Endothelial cell of umbilical vein (primary cell): ENCODE measurements at regions of chr17 and their contacts with region 1.

Region 1: GRCh38 chr17:69246726-69247375 is 18.2 kb upstream of the ABCA10 start:
- DNase-seq: peak; percentile 69
- H3K4me3 ChIP-seq: no peak overlapping the region
- H3K27ac ChIP-seq: no peak overlapping the region
- H3K4me1 ChIP-seq: no peaks in the 10 kb centered on the region
- H3K27me3 ChIP-seq: no peaks in the 10 kb centered on the region
- CTCF ChIP-seq: peak in 1 of 2 donors; percentile 27
- POLR2A ChIP-seq: no peak

Region 2: DNA sequence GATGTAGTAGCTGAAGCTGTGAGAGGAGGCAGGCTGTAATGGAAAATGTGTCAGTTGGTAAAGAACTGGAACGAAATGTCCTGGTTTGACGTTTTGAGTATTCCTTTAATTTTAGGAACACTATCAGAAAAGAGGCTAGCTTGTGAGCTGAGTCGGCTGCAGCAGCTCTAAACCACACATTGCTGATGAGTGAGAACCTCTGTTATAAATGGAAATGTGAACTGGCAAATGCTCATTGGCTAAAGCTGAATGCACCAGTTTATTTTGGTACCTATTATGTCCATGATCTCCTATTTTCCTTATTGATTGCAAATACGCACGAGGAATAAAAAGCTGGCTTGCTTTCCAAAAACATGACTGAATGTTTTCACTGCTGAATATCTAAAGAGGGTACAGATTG is 778.5 kb before region 1 on chr17:
- CTCF ChIA-PET with region 1: interaction called, 5 read pairs
- POLR2A ChIA-PET with region 1: no interaction called
- dilution Hi-C with region 1: no loop called
- intact Hi-C with region 1: loop called (anchors 5 kb)
- DNase-seq: no peak
- H3K4me3 ChIP-seq: no peak overlapping the region
- H3K27ac ChIP-seq: no peak overlapping the region
- H3K4me1 ChIP-seq: no peaks in the 10 kb centered on the region
- H3K27me3 ChIP-seq: peaks cover 6 to 8% of the 10 kb centered on the region in 2 experiments
- CTCF ChIP-seq: no peak
- POLR2A ChIP-seq: no peak

Region 3: GRCh38 chr17:68533887-68534694 is 712.8 kb before region 1 on chr17:
- CTCF ChIA-PET with region 1: interaction called, 24 read pairs
- POLR2A ChIA-PET with region 1: no interaction called
- dilution Hi-C with region 1: no loop called
- intact Hi-C with region 1: loop called (anchors 2 kb)
- DNase-seq: peak; percentile 29
- H3K4me3 ChIP-seq: no peak overlapping the region
- H3K27ac ChIP-seq: no peak overlapping the region
- H3K4me1 ChIP-seq: no peaks in the 10 kb centered on the region
- H3K27me3 ChIP-seq: no peaks in the 10 kb centered on the region
- CTCF ChIP-seq: peak; percentile 12 to 13
- POLR2A ChIP-seq: no peak

Region 4: DNA sequence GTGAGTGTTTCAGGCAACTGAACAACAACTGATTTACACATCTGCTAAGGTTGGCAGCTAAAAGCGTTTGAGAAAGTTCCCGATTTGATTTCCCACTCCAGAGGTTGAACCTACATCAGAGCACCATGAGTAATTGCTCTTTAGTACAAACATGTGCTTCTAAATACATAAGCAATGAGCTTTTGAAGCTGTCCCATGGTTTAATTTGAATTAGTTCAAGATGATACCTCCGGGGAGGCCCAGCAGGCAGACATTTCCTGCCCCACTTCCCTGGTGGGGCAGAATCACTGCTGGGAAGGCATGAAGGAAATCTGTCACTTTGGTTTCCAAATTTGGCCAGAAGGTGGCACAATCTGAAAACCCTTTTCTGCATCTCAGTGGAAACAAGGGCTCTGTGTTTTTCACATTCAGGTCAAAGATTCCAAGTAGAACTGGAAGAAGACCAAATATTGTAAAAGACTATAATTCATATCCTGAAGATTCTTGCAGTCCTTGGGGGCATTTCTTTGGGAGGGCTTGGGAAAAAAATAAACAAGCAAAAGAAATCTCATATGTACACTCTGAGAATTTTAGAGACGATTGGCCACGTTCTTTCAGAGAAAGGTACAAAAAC is 469.5 kb before region 1 on chr17:
- CTCF ChIA-PET with region 1: interaction called, 72 read pairs
- POLR2A ChIA-PET with region 1: no interaction called
- dilution Hi-C with region 1: no loop called
- intact Hi-C with region 1: loop called (anchors 1 kb)
- DNase-seq: peak; percentile 90
- H3K4me3 ChIP-seq: no peak overlapping the region
- H3K27ac ChIP-seq: peak overlapping the region; percentile 44
- H3K4me1 ChIP-seq: peaks cover 36% of the 10 kb centered on the region
- H3K27me3 ChIP-seq: no peaks in the 10 kb centered on the region
- CTCF ChIP-seq: peak; percentile 63
- POLR2A ChIP-seq: no peak

Region 5: DNA sequence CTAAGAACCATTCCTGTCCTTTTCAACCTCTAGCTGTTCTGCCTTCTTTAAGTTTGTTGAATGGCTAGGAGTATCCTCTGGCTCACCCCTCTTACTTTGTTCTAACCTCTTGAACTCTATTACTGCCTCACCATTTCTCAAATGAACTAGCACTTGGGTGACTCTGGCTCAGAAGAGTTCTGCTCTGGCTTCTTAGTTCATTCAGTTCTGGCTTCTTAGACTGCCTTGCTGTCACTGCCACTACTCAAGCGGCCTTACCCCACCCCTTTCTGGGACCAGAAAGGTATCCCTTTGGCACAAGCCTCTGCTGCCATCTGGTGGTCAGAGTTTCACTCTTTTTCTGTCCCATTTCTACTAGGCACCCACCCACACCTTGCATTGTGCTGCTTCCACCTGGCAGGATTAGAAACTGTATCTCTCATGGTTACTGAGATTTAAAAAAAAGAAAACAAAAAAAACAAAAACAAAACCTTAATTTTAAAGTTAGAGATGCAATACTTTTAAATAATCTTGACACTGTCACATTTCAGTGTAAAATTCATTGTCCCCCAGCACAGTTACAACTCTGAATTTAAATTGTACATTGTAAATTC is 11.4 kb before region 1 on chr17:
- CTCF ChIA-PET with region 1: interaction called, 13 read pairs
- POLR2A ChIA-PET with region 1: no interaction called
- dilution Hi-C with region 1: no loop called
- intact Hi-C with region 1: no loop called
- DNase-seq: peak; percentile 90
- H3K4me3 ChIP-seq: no peak overlapping the region
- H3K27ac ChIP-seq: peak overlapping the region; percentile 24
- H3K4me1 ChIP-seq: peaks cover 4% of the 10 kb centered on the region
- H3K27me3 ChIP-seq: no peaks in the 10 kb centered on the region
- CTCF ChIP-seq: peak; percentile 67 to 68
- POLR2A ChIP-seq: no peak

Region 6: DNA sequence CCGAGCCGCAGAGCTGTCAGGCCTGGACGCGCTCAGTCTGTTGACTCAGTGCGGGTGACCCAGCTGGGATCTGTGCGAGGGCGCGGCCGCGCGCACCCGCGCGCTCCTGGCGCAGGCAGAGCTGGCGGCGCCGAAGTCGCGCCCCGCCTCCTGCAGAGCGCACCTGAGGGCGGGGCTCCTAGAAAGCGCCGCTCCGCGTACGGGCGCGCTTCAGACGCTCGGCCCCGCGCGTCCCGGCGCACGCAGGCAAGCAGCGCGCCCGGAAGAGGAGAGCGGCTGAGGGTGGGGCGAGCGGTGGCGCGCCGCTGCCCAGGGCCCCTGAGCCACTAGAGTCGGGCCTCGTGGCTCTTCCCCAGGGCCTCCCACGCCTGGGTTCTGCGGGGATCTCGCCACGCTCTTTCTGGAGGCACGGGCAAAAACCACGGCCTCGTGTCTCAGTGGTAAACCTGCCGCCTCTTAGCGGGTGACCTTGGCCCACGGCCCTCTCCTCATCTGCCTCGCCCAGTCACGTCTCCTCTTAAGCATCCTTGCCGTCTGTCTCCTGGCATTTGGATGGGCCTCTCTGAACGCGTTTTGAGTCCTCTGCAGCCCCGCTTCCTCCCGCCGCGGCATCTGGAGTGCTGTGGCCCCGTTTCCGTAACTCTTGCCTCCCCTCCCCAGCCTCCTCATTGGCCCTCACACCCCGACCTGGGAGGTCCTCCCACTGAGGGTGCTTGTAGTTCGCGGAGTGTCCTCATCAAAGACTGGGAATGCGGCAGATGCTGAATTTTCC is 80.4 kb after region 1 on chr17 and contains the start of gene ABCA5:
- CTCF ChIA-PET with region 1: interaction called, 13 read pairs
- POLR2A ChIA-PET with region 1: no interaction called
- dilution Hi-C with region 1: no loop called
- intact Hi-C with region 1: no loop called
- DNase-seq: peak; percentile 91
- H3K4me3 ChIP-seq: peak within 1 kb of the TSS; percentile 70 to 89 (median 70)
- H3K27ac ChIP-seq: peak within 1 kb of the TSS; percentile 19
- H3K4me1 ChIP-seq: peaks cover 8% of the 10 kb centered on the region
- H3K27me3 ChIP-seq: no peaks in the 10 kb centered on the region
- CTCF ChIP-seq: no peak
- POLR2A ChIP-seq: peak; percentile 87
- total RNA-seq, gene ABCA5: 23.2 and 25.4 TPM in 2 replicates

Region 7: DNA sequence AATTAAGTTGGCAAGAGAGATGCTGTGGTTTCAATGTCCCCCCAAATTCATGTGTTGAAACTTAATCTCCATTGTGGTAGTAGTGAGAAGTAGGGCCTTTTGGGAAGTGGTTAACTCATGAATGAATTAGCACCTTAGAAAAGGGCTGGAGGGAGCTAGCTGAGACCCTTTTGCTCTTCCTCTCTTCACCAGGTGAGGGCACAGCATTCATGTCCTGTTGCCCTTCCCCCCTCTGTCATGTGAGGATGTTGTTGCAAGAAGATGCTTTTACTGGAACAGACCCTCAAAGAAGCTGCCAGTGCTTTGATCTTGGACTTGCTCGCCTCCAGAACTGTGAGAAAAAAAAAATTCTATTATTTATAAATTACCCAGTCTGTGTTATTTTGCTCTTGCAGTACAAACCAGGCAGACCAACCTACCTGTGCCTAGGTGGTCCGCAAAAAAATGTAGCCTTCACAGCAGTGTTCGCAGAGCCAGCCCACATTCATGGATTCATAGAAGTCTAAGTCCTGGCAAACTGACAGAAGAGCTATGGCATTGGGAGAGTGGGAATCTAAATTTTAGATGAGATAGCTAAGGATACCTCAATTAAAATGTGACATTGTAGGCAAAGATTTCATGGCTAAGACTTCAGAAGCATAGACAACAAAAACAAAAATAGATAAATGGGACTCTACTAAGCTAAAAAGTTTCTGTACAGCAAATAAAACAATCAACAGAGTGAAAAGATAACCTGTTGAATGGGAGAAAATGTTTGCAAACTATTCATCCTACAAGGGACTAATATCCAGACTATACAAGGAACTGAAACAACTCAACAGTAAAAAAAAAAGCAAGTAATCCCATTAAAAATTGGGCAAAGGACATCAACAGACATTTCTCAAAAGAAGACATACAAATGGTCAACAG is 112.1 kb after region 1 on chr17:
- CTCF ChIA-PET with region 1: no interaction called
- POLR2A ChIA-PET with region 1: no interaction called
- dilution Hi-C with region 1: no loop called
- intact Hi-C with region 1: no loop called
- DNase-seq: peak; percentile 3
- H3K4me3 ChIP-seq: no peak overlapping the region
- H3K27ac ChIP-seq: no peak overlapping the region
- H3K4me1 ChIP-seq: no peaks in the 10 kb centered on the region
- H3K27me3 ChIP-seq: no peaks in the 10 kb centered on the region
- CTCF ChIP-seq: peak in 1 of 2 donors; percentile 8
- POLR2A ChIP-seq: no peak